A673 (cell line): ENCODE measurements at regions of chr7 and their contacts with region 1.

Region 1: GRCh38 chr7:35374538-35375257 is 120.8 kb upstream of the TBX20 start:
- DNase-seq: no peak
- H3K4me3 ChIP-seq: no peak overlapping the region
- H3K27ac ChIP-seq: no peak overlapping the region
- H3K4me1 ChIP-seq: no peaks in the 10 kb centered on the region
- H3K27me3 ChIP-seq: peaks cover 3% of the 10 kb centered on the region
- CTCF ChIP-seq: no peak

Region 2: GRCh38 chr7:35329026-35329425 is 45.7 kb before region 1 on chr7:
- CTCF ChIA-PET with region 1: no interaction called
- POLR2A ChIA-PET with region 1: no interaction called
- intact Hi-C with region 1: no loop called
- DNase-seq: no peak
- H3K4me3 ChIP-seq: no peak overlapping the region
- H3K27ac ChIP-seq: no peak overlapping the region
- H3K4me1 ChIP-seq: no peaks in the 10 kb centered on the region
- H3K27me3 ChIP-seq: no peaks in the 10 kb centered on the region
- CTCF ChIP-seq: no peak

Region 3: GRCh38 chr7:35401217-35401879 is 26.6 kb after region 1 on chr7:
- CTCF ChIA-PET with region 1: no interaction called
- POLR2A ChIA-PET with region 1: interaction called, 22 read pairs
- intact Hi-C with region 1: no loop called
- DNase-seq: no peak
- H3K4me3 ChIP-seq: no peak overlapping the region
- H3K27ac ChIP-seq: no peak overlapping the region
- H3K4me1 ChIP-seq: no peaks in the 10 kb centered on the region
- H3K27me3 ChIP-seq: peaks cover 3% of the 10 kb centered on the region
- CTCF ChIP-seq: no peak

Region 4: GRCh38 chr7:35463176-35463575 is 88.5 kb after region 1 on chr7:
- CTCF ChIA-PET with region 1: no interaction called
- POLR2A ChIA-PET with region 1: no interaction called
- intact Hi-C with region 1: no loop called
- DNase-seq: no peak
- H3K4me3 ChIP-seq: no peak overlapping the region
- H3K27ac ChIP-seq: no peak overlapping the region
- H3K4me1 ChIP-seq: no peaks in the 10 kb centered on the region
- H3K27me3 ChIP-seq: no peaks in the 10 kb centered on the region
- CTCF ChIP-seq: no peak